MCF 10A (cell line): ENCODE measurements at regions of chr7 and their contacts with region 1.

Region 1: DNA sequence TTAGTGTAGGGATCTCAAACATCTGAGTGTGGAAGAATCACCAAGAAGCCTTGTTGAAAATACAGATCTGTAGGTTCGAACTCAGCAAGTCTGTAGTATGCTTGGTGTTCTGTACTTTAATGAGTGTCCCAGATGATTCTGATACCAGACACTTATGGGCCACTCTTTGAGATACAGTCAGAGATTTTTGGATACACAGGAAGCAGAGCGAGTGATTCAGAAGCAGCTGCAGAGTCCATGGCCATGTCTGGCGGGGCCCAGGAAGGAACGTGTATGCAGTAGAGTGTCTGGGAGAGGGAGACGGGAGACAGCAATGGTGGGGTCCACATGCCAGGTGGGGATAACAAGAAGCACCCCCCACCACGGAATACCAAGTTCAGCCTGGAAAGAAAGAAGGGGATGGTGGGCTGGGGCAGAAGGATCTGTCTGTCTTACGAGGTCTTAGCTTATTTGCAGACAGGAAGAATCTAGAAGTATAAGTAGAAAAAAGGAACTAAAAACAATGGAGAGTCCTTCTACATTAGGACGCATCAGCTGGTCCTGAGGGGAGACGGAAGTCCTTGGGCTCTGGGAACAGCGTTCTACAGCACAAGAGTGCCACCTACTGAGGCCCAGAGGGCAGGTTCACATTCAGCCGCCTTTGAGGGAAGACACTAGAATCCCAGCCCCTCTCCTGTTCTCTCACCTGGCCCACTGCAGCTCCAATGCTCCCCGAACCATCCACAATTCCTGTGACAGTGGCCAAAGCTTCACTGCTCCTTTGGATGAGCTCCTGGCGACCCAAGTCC is 55.4 kb downstream of the SLC37A3 start:
- DNase-seq: peak; percentile 25
- H3K4me3 Mint-ChIP-seq: no peak overlapping the region
- H3K27ac Mint-ChIP-seq: no peak overlapping the region
- H3K4me1 Mint-ChIP-seq: no peaks in the 10 kb centered on the region
- H3K27me3 Mint-ChIP-seq: no peaks in the 10 kb centered on the region
- CTCF ChIP-seq: peak; percentile 20

Region 2: GRCh38 chr7:140358412-140359051 is 15.6 kb after region 1 on chr7:
- CTCF ChIA-PET with region 1: interaction called, 14 read pairs
- POLR2A ChIA-PET with region 1: interaction called, 3 read pairs
- intact Hi-C with region 1: no loop called
- DNase-seq: no peak
- H3K4me3 Mint-ChIP-seq: no peak overlapping the region
- H3K27ac Mint-ChIP-seq: peak overlapping the region; percentile 79
- H3K4me1 Mint-ChIP-seq: no peaks in the 10 kb centered on the region
- H3K27me3 Mint-ChIP-seq: no peaks in the 10 kb centered on the region
- CTCF ChIP-seq: no peak